PC-9 (cell line): ENCODE measurements at regions of chr2 and their contacts with region 1.

Region 1: DNA sequence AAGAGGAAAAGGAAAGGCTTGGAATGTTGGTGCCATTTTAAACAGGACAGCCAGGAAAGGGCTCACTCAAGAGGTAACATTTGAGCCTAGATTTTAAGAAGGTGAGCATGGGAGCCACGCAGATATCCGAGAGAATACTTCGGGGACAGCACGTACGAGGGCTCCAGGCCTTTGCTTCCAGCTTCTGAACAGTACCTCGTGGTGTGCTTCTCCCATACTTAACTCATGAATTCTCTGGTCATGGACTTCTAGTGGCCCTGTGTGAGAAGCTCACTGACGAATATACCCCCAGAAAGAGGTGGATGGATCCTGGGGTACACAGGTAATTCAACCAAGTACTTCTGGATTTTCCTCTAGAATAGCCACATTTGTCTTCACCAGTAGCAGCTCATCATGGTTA is 2.7 kb upstream of the VIT start:
- DNase-seq: no peak
- H3K4me3 ChIP-seq: no peak overlapping the region
- H3K27ac ChIP-seq: no peak overlapping the region
- H3K4me1 ChIP-seq: no peaks in the 10 kb centered on the region
- H3K27me3 ChIP-seq: no peaks in the 10 kb centered on the region
- CTCF ChIP-seq: no peak

Region 2: DNA sequence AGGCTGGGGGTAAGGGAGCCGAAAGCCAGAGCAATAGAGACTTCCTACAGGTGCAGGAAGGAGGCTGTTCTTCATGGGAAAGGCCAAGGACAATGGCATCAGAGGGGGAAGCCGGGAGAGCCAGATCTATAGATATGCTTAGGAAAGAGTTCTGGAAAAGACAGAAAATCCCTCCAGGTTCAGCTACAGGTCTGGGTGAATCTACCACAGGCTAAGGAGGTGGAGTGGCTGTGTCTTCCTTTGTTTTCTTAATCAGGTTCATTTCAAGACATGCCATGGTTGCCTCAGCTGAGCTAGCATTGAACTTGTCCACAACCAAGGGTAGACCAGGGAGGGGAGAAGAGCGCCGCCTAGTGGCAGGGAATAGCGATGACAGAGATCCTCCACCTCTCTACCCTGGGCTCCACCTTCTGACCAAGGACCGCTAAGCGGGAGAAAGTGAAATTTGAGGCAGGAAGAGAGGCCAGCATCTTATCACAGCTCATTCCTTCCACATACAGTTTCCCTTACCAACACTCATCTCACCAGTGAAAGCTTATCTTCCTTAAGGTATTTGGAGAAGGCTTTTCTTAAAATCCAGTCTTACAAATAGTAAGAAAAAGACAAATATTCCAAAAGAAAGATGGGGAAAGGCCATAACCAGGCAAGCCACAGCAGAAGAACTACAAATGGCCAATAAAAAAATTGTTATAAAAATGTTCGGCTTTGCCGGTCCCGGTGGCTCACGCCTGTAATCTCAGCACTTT is 76.9 kb after region 1 on chr2:
- CTCF ChIA-PET with region 1: no interaction called
- POLR2A ChIA-PET with region 1: no interaction called
- intact Hi-C with region 1: loop called (anchors 5 kb)
- DNase-seq: peak in 1 of 2 experiments; percentile 32
- H3K4me3 ChIP-seq: no peak overlapping the region
- H3K27ac ChIP-seq: no peak overlapping the region
- H3K4me1 ChIP-seq: no peaks in the 10 kb centered on the region
- H3K27me3 ChIP-seq: no peaks in the 10 kb centered on the region
- CTCF ChIP-seq: peak; percentile 68